ENCODE measurements at regions of chr3 and their contacts with region 1.

Region 1: DNA sequence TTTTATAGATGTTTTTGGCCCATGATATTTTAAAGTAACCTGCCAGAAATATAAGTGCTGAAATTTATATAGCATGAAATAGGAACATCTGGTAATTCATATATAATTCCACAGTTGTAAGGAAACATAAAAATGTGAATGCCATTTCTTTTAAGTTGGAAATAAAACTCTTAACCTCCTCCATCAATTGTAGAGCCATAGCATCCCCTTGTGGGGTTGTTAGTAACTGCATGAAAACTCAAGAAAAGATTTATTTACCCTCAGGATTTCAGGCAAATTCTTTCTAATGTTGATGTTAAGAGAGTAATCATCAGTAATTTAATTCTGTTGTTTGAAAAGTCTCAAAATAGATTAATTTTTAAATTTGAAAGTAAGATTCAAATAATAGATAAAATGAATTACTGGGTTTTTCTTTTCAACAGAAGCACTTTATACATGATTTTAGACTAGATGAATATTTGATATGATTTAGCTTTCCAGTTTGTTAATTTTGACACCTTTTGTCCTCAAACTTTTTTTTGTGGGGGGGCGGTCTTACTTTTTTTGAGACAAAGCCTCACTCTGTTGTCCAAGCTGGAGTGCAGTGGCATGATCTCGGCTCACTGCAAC is 74.7 kb downstream of the RASA2 start:
- DNase-seq: no peak
- H3K4me3 ChIP-seq: no peak overlapping the region
- H3K27ac ChIP-seq: no peak overlapping the region
- H3K4me1 ChIP-seq: no peaks in the 10 kb centered on the region
- H3K27me3 ChIP-seq: no peaks in the 10 kb centered on the region
- CTCF ChIP-seq: peak in 2 of 3 experiments; percentile 67 to 80; a peak in 2 of 4 replicates
- EP300 ChIP-seq: no peak
- POLR2A ChIP-seq: no peak
- RAD21 ChIP-seq: peak; percentile 88 to 97

Region 2: DNA sequence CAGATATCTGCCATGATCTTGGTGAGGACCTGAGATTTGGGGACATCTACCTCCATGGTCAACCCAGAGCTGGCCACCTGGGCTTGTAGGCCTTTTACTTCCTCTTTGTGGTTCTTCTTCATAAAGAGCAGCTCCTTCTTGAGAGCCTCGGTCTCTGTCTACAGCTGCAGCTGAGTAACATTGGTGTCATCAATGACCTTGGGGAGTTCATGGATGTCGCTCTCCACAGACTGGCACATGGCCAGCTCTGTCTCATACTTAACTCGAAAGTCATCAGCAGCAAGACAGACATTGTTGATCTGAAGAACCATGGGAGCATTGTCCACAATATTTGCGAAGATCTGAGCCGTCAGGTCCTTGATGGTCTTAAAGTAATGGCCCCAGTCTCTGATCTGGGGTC is 90.4 kb before region 1 on chr3:
- CTCF ChIA-PET with region 1: interaction called, 25 read pairs
- POLR2A ChIA-PET with region 1: interaction called, 3 read pairs
- DNase-seq: no peak
- H3K4me3 ChIP-seq: no peak overlapping the region
- H3K27ac ChIP-seq: no peak overlapping the region
- H3K4me1 ChIP-seq: no peaks in the 10 kb centered on the region
- H3K27me3 ChIP-seq: no peaks in the 10 kb centered on the region
- CTCF ChIP-seq: no peak
- EP300 ChIP-seq: no peak
- POLR2A ChIP-seq: no peak
- RAD21 ChIP-seq: no peak

Region 3: GRCh38 chr3:141477224-141477623 is 84.3 kb before region 1 on chr3:
- CTCF ChIA-PET with region 1: interaction called, 25 read pairs
- POLR2A ChIA-PET with region 1: no interaction called
- DNase-seq: no peak
- H3K4me3 ChIP-seq: no peak overlapping the region
- H3K27ac ChIP-seq: no peak overlapping the region
- H3K4me1 ChIP-seq: no peaks in the 10 kb centered on the region
- H3K27me3 ChIP-seq: no peaks in the 10 kb centered on the region; a peak in 1 of 7 replicates
- CTCF ChIP-seq: no peak
- EP300 ChIP-seq: no peak
- POLR2A ChIP-seq: no peak
- RAD21 ChIP-seq: no peak

Region 4: GRCh38 chr3:141881702-141882101 is 320.2 kb after region 1 on chr3:
- CTCF ChIA-PET with region 1: no interaction called
- POLR2A ChIA-PET with region 1: no interaction called
- DNase-seq: no peak
- H3K4me3 ChIP-seq: no peak overlapping the region
- H3K27ac ChIP-seq: no peak overlapping the region
- H3K4me1 ChIP-seq: peaks cover 0 to 3% (median 0%) of the 10 kb centered on the region in 4 experiments; a peak in 1 of 7 replicates
- H3K27me3 ChIP-seq: no peaks in the 10 kb centered on the region
- CTCF ChIP-seq: no peak
- EP300 ChIP-seq: no peak
- POLR2A ChIP-seq: no peak
- RAD21 ChIP-seq: no peak